GM12878 (cell line): ENCODE measurements at regions of chr2 and their contacts with region 1.

Region 1: GRCh38 chr2:156476850-156477206 is 40.6 kb downstream of the GPD2 start:
- DNase-seq: peak; percentile 77
- ATAC-seq: peak; percentile 86
- H3K4me3 ChIP-seq: no peak overlapping the region
- H3K27ac ChIP-seq: peak overlapping the region; percentile 66
- H3K4me1 ChIP-seq: peaks cover 39% of the 10 kb centered on the region; the same call in 1 of the 2 replicates
- H3K27me3 ChIP-seq: no peaks in the 10 kb centered on the region
- CTCF ChIP-seq: no peak
- EP300 ChIP-seq: peak; percentile 24 to 52; a peak in 1 of 4 replicates
- POLR2A ChIP-seq: no peak
- RAD21 ChIP-seq: no peak

Region 2: GRCh38 chr2:156443089-156443488 is 33.7 kb before region 1 on chr2:
- CTCF ChIA-PET with region 1: interaction called, 6 read pairs
- POLR2A ChIA-PET with region 1: interaction called, 7 read pairs
- RAD21 ChIA-PET with region 1: interaction called, 20 read pairs
- SMC1A ChIA-PET with region 1: interaction called, 35 read pairs
- in situ Hi-C with region 1: no loop called
- intact Hi-C with region 1: no loop called
- DNase-seq: no peak
- ATAC-seq: no peak
- H3K4me3 ChIP-seq: no peak overlapping the region
- H3K27ac ChIP-seq: no peak overlapping the region
- H3K4me1 ChIP-seq: peaks cover 18% of the 10 kb centered on the region
- H3K27me3 ChIP-seq: no peaks in the 10 kb centered on the region
- CTCF ChIP-seq: no peak
- EP300 ChIP-seq: no peak
- POLR2A ChIP-seq: no peak
- RAD21 ChIP-seq: no peak

Region 3: DNA sequence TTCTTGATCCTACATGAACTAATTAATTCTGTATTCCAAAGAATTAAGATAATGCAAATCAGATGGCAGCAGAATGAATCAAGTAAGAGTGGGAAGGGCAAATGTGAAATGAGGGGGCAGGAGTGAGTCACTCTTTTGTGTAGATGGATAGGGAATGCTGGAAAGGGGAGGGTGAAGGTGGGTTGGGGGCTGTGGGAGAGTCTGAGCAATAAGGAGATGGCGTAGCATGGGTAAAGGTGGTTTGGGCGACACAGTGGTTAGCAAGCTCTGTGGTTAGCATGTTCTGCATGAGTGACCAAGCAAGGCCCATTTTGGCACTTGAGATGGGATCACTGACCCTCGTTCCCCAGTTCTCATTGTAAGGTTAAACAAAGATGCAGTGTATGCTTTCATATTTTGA is 20.2 kb before region 1 on chr2:
- CTCF ChIA-PET with region 1: interaction called, 4 read pairs
- POLR2A ChIA-PET with region 1: interaction called, 8 read pairs
- RAD21 ChIA-PET with region 1: interaction called, 4 read pairs
- SMC1A ChIA-PET with region 1: interaction called, 14 read pairs
- in situ Hi-C with region 1: no loop called
- intact Hi-C with region 1: no loop called
- DNase-seq: peak; percentile 78
- ATAC-seq: peak; percentile 93
- H3K4me3 ChIP-seq: 0 out of 2 replicates have a peak overlapping the region, but pooled peaks have one; percentile 7
- H3K27ac ChIP-seq: no peak overlapping the region
- H3K4me1 ChIP-seq: peaks cover 26% of the 10 kb centered on the region
- H3K27me3 ChIP-seq: no peaks in the 10 kb centered on the region
- CTCF ChIP-seq: no peak
- EP300 ChIP-seq: peak in 1 of 2 experiments; percentile 49; a peak in 1 of 4 replicates
- POLR2A ChIP-seq: no peak
- RAD21 ChIP-seq: no peak

Region 4: GRCh38 chr2:156464106-156464505 is 12.7 kb before region 1 on chr2:
- CTCF ChIA-PET with region 1: interaction called, 11 read pairs
- POLR2A ChIA-PET with region 1: interaction called, 8 read pairs
- RAD21 ChIA-PET with region 1: interaction called, 7 read pairs
- SMC1A ChIA-PET with region 1: interaction called, 16 read pairs
- in situ Hi-C with region 1: no loop called
- intact Hi-C with region 1: no loop called
- DNase-seq: no peak
- ATAC-seq: no peak
- H3K4me3 ChIP-seq: no peak overlapping the region
- H3K27ac ChIP-seq: no peak overlapping the region
- H3K4me1 ChIP-seq: no peaks in the 10 kb centered on the region
- H3K27me3 ChIP-seq: no peaks in the 10 kb centered on the region
- CTCF ChIP-seq: no peak
- EP300 ChIP-seq: no peak
- POLR2A ChIP-seq: no peak
- RAD21 ChIP-seq: no peak

Region 5: DNA sequence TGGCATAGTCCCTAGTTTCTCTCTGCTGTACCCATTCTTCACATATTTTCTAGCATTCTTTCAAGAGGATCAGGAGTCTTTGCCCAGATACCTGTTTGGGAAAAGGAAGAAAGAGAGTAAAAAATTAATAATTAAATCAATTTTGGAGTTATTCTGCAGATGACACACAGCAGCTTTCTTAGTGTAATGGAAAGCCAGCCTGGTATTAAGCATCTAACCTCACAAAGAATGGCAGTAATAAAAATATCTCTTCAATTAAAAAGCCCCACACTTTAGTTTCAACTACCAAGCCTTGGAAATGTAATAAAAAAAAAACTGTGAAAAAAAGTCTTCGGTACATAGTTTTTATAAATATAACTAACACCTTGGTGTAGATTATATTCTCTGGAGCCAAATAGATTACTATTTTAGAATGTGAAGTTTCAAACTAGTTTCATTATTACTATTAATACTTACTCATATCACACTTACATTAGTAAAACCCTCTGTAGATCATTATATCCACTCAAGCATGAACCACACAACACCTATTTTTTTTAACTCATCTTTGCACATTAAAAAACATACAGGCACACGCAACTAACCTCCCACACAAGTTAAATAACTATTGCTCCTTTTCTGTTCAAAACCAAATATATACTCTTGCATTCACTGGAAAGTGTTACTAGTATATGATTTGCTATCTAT is 50.3 kb after region 1 on chr2:
- CTCF ChIA-PET with region 1: interaction called, 4 read pairs
- POLR2A ChIA-PET with region 1: no interaction called
- RAD21 ChIA-PET with region 1: interaction called, 6 read pairs
- SMC1A ChIA-PET with region 1: interaction called, 5 read pairs
- in situ Hi-C with region 1: no loop called
- intact Hi-C with region 1: loop called (anchors 5 kb)
- DNase-seq: no peak
- ATAC-seq: peak; percentile 94
- H3K4me3 ChIP-seq: no peak overlapping the region
- H3K27ac ChIP-seq: peak overlapping the region; percentile 81
- H3K4me1 ChIP-seq: peaks cover 16% of the 10 kb centered on the region
- H3K27me3 ChIP-seq: no peaks in the 10 kb centered on the region
- CTCF ChIP-seq: no peak
- EP300 ChIP-seq: peak; percentile 96 to 99
- POLR2A ChIP-seq: no peak
- RAD21 ChIP-seq: no peak

Region 6: DNA sequence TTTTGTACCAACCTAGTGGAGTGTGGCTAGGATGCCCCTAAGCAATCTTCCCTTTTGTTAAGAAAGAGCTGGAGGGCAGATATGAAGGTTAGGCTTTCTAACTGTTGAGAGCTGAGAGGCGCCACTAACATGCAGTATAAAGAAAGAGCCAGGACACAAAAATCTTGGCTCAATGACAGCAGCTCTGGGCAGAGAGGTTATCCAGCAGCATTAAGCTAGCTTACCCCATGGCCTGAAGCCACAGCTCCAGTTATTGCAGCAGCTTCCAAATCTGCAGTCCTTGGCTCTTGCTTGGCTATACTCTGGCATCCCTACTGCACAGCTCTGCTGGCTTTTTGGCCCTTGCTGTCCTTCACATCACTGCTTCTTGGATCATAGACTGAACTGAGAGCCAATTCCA is 172.8 kb after region 1 on chr2:
- CTCF ChIA-PET with region 1: no interaction called
- POLR2A ChIA-PET with region 1: no interaction called
- RAD21 ChIA-PET with region 1: no interaction called
- SMC1A ChIA-PET with region 1: no interaction called
- in situ Hi-C with region 1: no loop called
- intact Hi-C with region 1: no loop called
- DNase-seq: no peak
- ATAC-seq: no peak
- H3K4me3 ChIP-seq: no peak overlapping the region
- H3K27ac ChIP-seq: no peak overlapping the region
- H3K4me1 ChIP-seq: no peaks in the 10 kb centered on the region
- H3K27me3 ChIP-seq: no peaks in the 10 kb centered on the region
- CTCF ChIP-seq: no peak
- EP300 ChIP-seq: no peak
- POLR2A ChIP-seq: no peak
- RAD21 ChIP-seq: no peak

Region 7: GRCh38 chr2:157015015-157015575 is 538.3 kb after region 1 on chr2:
- CTCF ChIA-PET with region 1: no interaction called
- POLR2A ChIA-PET with region 1: no interaction called
- RAD21 ChIA-PET with region 1: no interaction called
- SMC1A ChIA-PET with region 1: no interaction called
- in situ Hi-C with region 1: no loop called
- intact Hi-C with region 1: no loop called
- DNase-seq: no peak
- ATAC-seq: no peak
- H3K4me3 ChIP-seq: no peak overlapping the region
- H3K27ac ChIP-seq: no peak overlapping the region
- H3K4me1 ChIP-seq: no peaks in the 10 kb centered on the region
- H3K27me3 ChIP-seq: no peaks in the 10 kb centered on the region; a peak in 1 of 4 replicates
- CTCF ChIP-seq: no peak
- EP300 ChIP-seq: no peak
- POLR2A ChIP-seq: no peak
- RAD21 ChIP-seq: no peak